CD4-positive, alpha-beta T cell (primary cell): ENCODE measurements at regions of chr3 and their contacts with region 1.

Region 1: DNA sequence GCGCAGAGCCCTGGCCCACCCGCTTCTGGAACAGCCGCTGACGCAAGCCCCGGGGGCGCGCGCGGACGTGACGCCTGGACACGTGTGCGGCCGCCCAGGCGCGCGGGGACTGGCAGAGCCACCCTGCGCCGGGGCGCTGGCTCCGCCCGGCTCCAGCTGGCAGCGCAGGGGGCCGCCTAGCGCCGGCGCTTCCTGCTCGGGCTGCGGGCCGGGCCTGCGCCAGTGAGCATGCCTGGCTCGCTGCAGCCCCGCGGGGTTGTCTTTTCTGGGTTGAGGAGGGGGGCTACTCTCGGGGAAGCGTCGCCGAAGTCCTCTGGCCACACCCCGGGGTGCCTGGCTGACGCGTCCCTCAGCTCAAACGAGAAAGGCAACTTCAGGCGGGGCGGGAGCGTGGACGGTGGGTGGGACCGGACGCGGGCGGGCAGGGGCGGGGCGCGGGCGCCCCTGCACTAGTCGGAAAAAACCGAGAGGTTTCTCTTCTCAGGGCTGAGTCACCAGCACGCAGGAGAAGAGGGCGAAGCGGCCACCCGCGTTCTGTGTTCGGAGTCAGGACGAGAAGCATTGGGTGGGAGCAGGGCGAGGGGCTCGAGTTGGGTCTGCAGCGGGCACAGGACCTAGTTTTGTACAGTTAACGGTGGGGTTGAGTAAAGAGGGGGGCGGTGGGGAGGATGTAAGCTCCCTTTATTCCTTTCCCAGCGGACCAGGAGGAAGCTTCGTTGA is at the start of gene SIAH2:
- DNase-seq: peak; percentile 83 to 98 (median 90)
- ATAC-seq: peak; percentile 82
- H3K4me3 ChIP-seq: peak within 1 kb of the TSS; percentile 91
- H3K4me3 Mint-ChIP-seq: peak within 1 kb of the TSS; percentile 100
- H3K27ac ChIP-seq: peak within 1 kb of the TSS; percentile 98 to 99
- H3K27ac Mint-ChIP-seq: peak within 1 kb of the TSS; percentile 100
- H3K4me1 ChIP-seq: peaks cover 33% of the 10 kb centered on the region
- H3K4me1 Mint-ChIP-seq: peaks cover 47% of the 10 kb centered on the region
- H3K27me3 ChIP-seq: no peaks in the 10 kb centered on the region
- H3K27me3 Mint-ChIP-seq: no peaks in the 10 kb centered on the region
- CTCF ChIP-seq: no peak
- total RNA-seq, gene SIAH2: 73.7 to 76.1 TPM

Region 2: GRCh38 chr3:149129326-149130205 is 1633.7 kb before region 1 on chr3 and contains the start of gene HPS3:
- CTCF ChIA-PET with region 1: no interaction called
- POLR2A ChIA-PET with region 1: interaction called, 3 read pairs
- intact Hi-C with region 1: loop called in 1 of 2 experiments (anchors 10 kb)
- DNase-seq: peak; percentile 58 to 92 (median 74)
- ATAC-seq: peak; percentile 80
- H3K4me3 ChIP-seq: peak within 1 kb of the TSS; percentile 91
- H3K4me3 Mint-ChIP-seq: peak within 1 kb of the TSS; percentile 91
- H3K27ac ChIP-seq: peak within 1 kb of the TSS; percentile 38 to 62
- H3K27ac Mint-ChIP-seq: peak within 1 kb of the TSS; percentile 86
- H3K4me1 ChIP-seq: peaks cover 21% of the 10 kb centered on the region
- H3K4me1 Mint-ChIP-seq: peaks cover 49% of the 10 kb centered on the region
- H3K27me3 ChIP-seq: no peaks in the 10 kb centered on the region
- H3K27me3 Mint-ChIP-seq: peaks cover 3% of the 10 kb centered on the region
- CTCF ChIP-seq: no peak
- total RNA-seq, gene HPS3: 5.5 TPM

Region 3: DNA sequence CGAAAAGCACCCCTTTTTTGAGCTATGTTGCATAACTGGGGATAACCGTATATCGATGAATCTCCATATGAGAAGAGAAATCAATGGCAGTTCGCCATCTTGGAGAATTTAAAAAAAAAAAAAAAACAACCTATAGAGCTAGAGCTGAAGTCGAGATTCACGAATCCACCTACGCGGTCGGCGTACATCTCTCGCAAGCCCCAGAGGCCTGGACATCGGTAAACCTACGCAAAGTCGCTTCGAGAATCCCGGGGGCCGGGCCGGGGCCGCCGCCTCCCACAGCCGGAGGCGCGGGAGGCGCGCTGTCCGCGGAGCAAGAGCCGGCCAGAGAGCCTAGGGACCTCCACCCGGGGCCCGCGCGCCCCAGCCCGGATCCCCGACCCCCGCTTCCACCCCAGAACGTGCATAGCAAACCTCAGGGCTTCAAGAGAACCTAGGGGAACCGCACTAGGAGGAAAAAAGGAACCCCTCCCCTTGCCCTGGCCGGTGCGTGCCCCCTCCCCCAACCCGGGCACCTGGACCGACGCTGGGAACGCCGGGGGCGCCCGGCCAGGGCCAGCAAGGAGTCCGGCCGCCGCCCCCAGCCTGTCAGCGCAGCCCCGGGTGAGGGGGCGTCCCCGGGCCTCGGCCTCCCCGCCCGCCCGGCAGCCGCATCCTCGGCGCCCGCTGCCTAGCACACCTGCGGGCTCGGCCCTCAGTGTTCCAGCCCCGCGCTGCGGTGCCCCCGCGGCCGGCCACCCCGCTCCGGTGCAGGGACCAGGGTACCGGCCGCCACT is 793.2 kb before region 1 on chr3:
- CTCF ChIA-PET with region 1: no interaction called
- POLR2A ChIA-PET with region 1: interaction called, 4 read pairs
- intact Hi-C with region 1: loop called in 1 of 2 experiments (anchors 10 kb)
- DNase-seq: peak; percentile 66 to 90 (median 74)
- ATAC-seq: peak; percentile 55
- H3K4me3 ChIP-seq: peak overlapping the region; percentile 53
- H3K4me3 Mint-ChIP-seq: peak overlapping the region; percentile 94
- H3K27ac ChIP-seq: no peak overlapping the region
- H3K27ac Mint-ChIP-seq: peak overlapping the region; percentile 57
- H3K4me1 ChIP-seq: peaks cover 13% of the 10 kb centered on the region
- H3K4me1 Mint-ChIP-seq: peaks cover 27% of the 10 kb centered on the region
- H3K27me3 ChIP-seq: peaks cover 3 to 20% of the 10 kb centered on the region in 2 experiments
- H3K27me3 Mint-ChIP-seq: peaks cover 36% of the 10 kb centered on the region
- CTCF ChIP-seq: no peak

Region 4: DNA sequence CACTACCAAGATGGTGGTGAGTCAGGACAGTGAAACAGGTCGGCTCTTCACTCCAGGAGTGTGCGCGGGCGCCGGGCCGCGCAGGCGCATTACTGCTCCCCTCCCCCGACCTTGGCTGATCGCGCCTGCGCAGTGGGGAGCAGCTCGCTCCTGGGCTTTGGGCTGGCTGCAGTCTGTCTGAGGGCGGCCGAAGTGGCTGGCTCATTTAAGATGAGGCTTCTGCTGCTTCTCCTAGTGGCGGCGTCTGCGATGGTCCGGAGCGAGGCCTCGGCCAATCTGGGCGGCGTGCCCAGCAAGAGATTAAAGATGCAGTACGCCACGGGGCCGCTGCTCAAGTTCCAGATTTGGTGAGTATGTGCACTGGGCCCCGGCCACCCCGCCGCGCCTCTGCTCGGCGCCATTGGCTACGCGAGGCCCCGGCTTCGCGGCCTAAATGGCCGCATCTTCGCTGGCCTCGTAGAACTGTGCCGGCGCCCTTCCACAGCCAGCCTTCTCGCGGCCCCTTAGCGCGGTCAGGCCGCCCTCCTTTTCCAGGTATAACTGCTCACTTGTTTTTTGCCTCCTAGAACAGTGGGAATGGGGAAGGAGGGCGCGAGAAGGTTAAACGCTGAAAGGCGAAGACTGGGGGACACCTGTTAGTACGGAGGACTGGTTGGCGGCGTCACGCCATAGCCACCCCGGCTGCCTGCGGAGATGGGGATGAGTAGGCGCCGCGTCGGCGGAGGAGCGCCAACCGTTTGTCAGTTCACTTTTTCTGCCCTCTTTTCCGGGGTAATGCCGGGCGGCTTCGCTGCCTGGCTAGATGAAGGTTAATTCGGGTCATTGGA is 159.9 kb before region 1 on chr3 and contains the start of gene SELENOT:
- CTCF ChIA-PET with region 1: interaction called, 4 read pairs
- POLR2A ChIA-PET with region 1: interaction called, 57 read pairs
- intact Hi-C with region 1: loop called (anchors 1 kb)
- DNase-seq: peak; percentile 86 to 98 (median 94)
- ATAC-seq: peak; percentile 79
- H3K4me3 ChIP-seq: peak within 1 kb of the TSS; percentile 92
- H3K4me3 Mint-ChIP-seq: peak within 1 kb of the TSS; percentile 96
- H3K27ac ChIP-seq: peak within 1 kb of the TSS; percentile 97 to 98
- H3K27ac Mint-ChIP-seq: peak within 1 kb of the TSS; percentile 100
- H3K4me1 ChIP-seq: peaks cover 34% of the 10 kb centered on the region
- H3K4me1 Mint-ChIP-seq: peaks cover 75% of the 10 kb centered on the region
- H3K27me3 ChIP-seq: no peaks in the 10 kb centered on the region
- H3K27me3 Mint-ChIP-seq: no peaks in the 10 kb centered on the region
- CTCF ChIP-seq: no peak
- total RNA-seq, gene SELENOT: 110 to 115 TPM

Region 5: GRCh38 chr3:150721285-150722130 is 41.8 kb before region 1 on chr3:
- CTCF ChIA-PET with region 1: interaction called, 12 read pairs
- POLR2A ChIA-PET with region 1: interaction called, 11 read pairs
- intact Hi-C with region 1: loop called (anchors 2 to 5 kb)
- DNase-seq: peak in 3 of 14 experiments; percentile 74 to 82 (median 82)
- ATAC-seq: peak; percentile 87
- H3K4me3 ChIP-seq: no peak overlapping the region
- H3K4me3 Mint-ChIP-seq: no peak overlapping the region
- H3K27ac ChIP-seq: no peak overlapping the region
- H3K27ac Mint-ChIP-seq: no peak overlapping the region
- H3K4me1 ChIP-seq: peaks cover 3% of the 10 kb centered on the region
- H3K4me1 Mint-ChIP-seq: peaks cover 5% of the 10 kb centered on the region
- H3K27me3 ChIP-seq: no peaks in the 10 kb centered on the region
- H3K27me3 Mint-ChIP-seq: no peaks in the 10 kb centered on the region
- CTCF ChIP-seq: peak; percentile 88

Region 6: DNA sequence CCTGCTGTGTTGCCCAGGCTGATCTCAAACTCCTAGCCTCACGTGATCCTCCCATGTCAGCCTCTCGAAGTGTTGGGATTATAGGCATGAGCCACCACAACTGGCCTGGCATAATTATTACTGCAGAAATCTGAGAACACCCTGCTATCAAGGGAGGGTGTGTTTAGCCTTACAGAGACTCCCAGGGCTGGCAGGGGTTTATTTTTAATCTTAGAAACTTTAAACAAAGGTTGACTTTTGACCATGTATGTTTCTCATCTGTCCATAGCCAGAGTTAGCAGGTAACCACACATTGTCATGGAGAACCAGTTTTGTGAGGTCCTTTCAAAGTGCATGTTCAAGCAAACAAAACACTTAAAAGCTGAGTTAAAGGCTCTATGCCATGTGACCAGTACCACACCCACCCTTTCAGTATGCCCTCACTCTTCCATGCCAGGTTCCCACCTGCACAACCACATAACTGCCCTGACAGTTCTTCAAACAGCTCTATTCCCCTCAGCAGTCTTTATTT is 11.5 kb before region 1 on chr3:
- CTCF ChIA-PET with region 1: no interaction called
- POLR2A ChIA-PET with region 1: interaction called, 14 read pairs
- intact Hi-C with region 1: no loop called
- DNase-seq: no peak
- ATAC-seq: no peak
- H3K4me3 ChIP-seq: no peak overlapping the region
- H3K4me3 Mint-ChIP-seq: no peak overlapping the region
- H3K27ac ChIP-seq: no peak overlapping the region
- H3K27ac Mint-ChIP-seq: peak overlapping the region; percentile 42
- H3K4me1 ChIP-seq: peaks cover 44% of the 10 kb centered on the region
- H3K4me1 Mint-ChIP-seq: peaks cover 88% of the 10 kb centered on the region
- H3K27me3 ChIP-seq: no peaks in the 10 kb centered on the region
- H3K27me3 Mint-ChIP-seq: no peaks in the 10 kb centered on the region
- CTCF ChIP-seq: no peak

Region 7: DNA sequence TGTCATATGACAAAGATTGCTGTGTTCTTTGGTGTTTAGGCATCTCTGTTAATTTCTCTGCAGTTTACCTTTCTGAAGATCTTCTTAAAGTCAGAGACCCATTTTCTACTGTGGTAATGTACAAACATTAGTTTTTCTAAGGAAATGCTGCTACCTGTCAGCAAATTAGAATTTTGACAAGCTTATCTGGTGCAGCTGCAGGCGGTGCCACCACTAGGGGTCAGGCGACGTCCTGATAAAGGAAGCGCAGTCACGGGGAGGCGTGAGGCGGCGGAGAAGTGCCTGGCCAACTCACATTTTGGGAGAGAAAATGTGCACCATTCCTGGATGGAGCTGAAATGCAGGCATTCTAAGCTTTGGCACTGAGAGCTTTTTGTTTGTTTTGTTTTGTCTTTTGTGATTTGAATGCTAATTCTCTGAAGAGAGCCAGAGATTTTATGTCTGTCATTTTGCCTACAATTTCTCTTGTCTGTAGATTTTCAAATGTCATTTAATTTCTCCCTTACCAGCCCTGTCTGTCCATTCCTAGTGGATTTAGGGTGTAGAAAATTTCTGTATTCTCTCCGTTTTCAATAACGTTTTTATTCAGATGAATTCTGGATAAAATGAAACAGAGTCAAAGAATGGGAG is 24.6 kb after region 1 on chr3:
- CTCF ChIA-PET with region 1: interaction called, 22 read pairs
- POLR2A ChIA-PET with region 1: interaction called, 16 read pairs
- intact Hi-C with region 1: no loop called
- DNase-seq: peak; percentile 63 to 85 (median 72)
- ATAC-seq: peak; percentile 86
- H3K4me3 ChIP-seq: no peak overlapping the region
- H3K4me3 Mint-ChIP-seq: no peak overlapping the region
- H3K27ac ChIP-seq: no peak overlapping the region
- H3K27ac Mint-ChIP-seq: no peak overlapping the region
- H3K4me1 ChIP-seq: peaks cover 3% of the 10 kb centered on the region
- H3K4me1 Mint-ChIP-seq: no peaks in the 10 kb centered on the region
- H3K27me3 ChIP-seq: no peaks in the 10 kb centered on the region
- H3K27me3 Mint-ChIP-seq: peaks cover 7% of the 10 kb centered on the region
- CTCF ChIP-seq: peak; percentile 98